ENCODE measurements at regions of chr2 and their contacts with region 1.

Region 1: DNA sequence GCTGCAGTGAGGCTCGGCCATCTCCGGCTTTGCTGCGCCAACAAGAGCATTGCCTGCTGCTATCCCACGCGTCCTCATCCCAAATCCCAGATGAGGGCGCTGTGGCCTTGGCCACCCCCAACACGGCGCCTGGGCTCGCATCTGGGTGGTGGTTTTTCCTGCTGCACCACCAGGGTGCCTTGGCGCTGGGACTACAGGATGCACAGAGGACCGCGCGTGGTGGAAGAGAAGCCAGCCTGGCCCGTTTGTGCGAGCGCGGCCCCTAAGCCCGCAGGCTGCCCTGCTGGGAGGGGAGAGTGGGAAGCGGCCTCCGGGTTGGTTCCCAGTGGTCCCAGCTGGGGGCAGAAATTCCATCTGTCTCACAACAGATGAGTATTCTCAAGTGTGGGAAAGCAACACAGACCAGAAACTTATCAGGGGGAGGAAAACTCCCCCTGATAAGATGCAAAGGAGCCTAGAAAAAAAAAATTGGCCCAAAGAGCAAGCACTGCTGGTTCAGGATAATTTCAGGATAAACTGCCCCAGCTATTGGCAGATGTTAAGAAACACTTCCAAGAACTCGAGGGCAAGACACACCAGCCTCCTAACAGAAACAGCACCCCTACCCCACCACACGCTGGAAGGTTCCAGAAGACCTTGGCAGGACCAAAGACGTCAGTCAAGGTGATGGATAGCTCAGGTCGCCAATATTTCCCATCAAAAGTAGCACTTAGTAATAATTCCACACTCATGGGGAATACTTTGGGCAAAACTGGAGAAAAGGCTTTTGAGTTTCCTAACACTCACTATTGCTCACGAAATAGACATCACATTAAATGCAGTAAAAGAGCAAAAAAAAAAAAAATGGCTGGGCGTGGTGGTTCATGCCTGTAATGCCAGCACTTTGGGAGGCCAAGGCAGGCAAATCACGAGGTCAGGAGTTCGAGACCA is 152.1 kb downstream of the PXDN start:
- DNase-seq: peak; percentile 76
- H3K4me3 ChIP-seq: no peak overlapping the region
- H3K27ac ChIP-seq: peak overlapping the region in 6 of 8 donors; percentile 7 to 51 (median 34)
- H3K4me1 ChIP-seq: peaks cover 0 to 21% (median 9%) of the 10 kb centered on the region in 6 donors
- H3K27me3 ChIP-seq: peaks cover 0 to 41% (median 10%) of the 10 kb centered on the region in 7 donors
- CTCF ChIP-seq: peak in 9 of 11 experiments; percentile 6 to 58 (median 45)
- POLR2A ChIP-seq: no peak

Region 2: GRCh38 chr2:1742681-1743395 is 150.6 kb after region 1 on chr2:
- intact Hi-C with region 1: loop called (anchors 10 kb)
- DNase-seq: peak; percentile 77
- H3K4me3 ChIP-seq: peak overlapping the region; percentile 44 to 77 (median 58)
- H3K27ac ChIP-seq: peak overlapping the region; percentile 42 to 88 (median 82)
- H3K4me1 ChIP-seq: peaks cover 0 to 50% (median 24%) of the 10 kb centered on the region in 6 donors
- H3K27me3 ChIP-seq: peaks cover 0 to 61% (median 21%) of the 10 kb centered on the region in 7 donors
- CTCF ChIP-seq: peak in 6 of 11 experiments; percentile 20 to 52 (median 36)
- POLR2A ChIP-seq: no peak

Measured in spleen (tissue), 13 donors.